H1 (cell line): ENCODE measurements at regions of chr12 and their contacts with region 1.

Region 1: GRCh38 chr12:120469450-120470149 is at the start of gene SRSF9:
- DNase-seq: peak; percentile 89 to 99
- H3K4me3 ChIP-seq: peak within 1 kb of the TSS; percentile 76 to 97 (median 78)
- H3K27ac ChIP-seq: peak within 1 kb of the TSS; percentile 96
- H3K4me1 ChIP-seq: peaks cover 0 to 5% (median 0%) of the 10 kb centered on the region in 4 experiments; a peak in 2 of 7 replicates
- H3K27me3 ChIP-seq: no peaks in the 10 kb centered on the region
- CTCF ChIP-seq: peak; percentile 73 to 86 (median 78)
- EP300 ChIP-seq: no peak
- POLR2A ChIP-seq: peak; percentile 66 to 89
- RAD21 ChIP-seq: peak in 1 of 2 experiments; percentile 37; a peak in 2 of 4 replicates
- total RNA-seq, gene SRSF9: 304 and 307 TPM in 2 replicates

Region 2: GRCh38 chr12:120142231-120142877 is 327.2 kb before region 1 on chr12:
- CTCF ChIA-PET with region 1: no interaction called
- POLR2A ChIA-PET with region 1: no interaction called
- DNase-seq: no peak
- H3K4me3 ChIP-seq: no peak overlapping the region
- H3K27ac ChIP-seq: no peak overlapping the region
- H3K4me1 ChIP-seq: no peaks in the 10 kb centered on the region; a peak in 1 of 7 replicates
- H3K27me3 ChIP-seq: no peaks in the 10 kb centered on the region
- CTCF ChIP-seq: no peak
- EP300 ChIP-seq: no peak
- POLR2A ChIP-seq: no peak
- RAD21 ChIP-seq: no peak

Region 3: DNA sequence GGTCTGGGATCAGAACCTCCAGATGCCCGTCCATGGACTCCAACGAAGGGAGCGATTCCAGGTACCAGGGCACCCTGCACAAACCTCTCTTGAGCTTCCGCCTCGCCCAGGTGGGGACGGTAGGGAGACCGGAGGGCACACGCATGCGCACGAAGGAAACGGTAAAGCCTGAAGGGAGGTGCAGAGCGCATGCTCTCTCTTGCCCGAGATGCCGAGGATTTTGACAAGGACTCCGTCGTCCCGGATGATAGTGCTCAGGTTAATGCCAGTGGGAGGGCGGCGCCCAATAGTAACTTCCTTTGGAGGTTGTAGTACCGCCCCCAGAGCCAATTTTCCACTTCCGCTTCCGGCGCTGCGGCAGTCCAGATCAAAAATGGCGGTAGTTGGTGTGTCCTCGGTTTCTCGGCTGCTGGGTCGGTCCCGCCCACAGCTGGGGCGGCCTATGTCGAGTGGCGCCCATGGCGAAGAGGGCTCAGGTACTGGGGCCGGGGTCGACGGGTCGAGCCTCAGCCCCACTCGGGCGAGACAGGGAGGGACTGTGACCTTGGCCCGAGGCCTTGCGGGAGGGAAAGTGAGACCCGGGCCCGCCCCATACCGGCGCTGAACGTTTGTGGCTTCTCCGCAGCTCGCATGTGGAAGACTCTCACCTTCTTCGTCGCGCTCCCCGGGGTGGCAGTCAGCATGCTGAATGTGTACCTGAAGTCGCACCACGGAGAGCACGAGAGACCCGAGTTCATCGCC is 31.7 kb before region 1 on chr12 and contains the start of gene COX6A1:
- CTCF ChIA-PET with region 1: interaction called, 81 read pairs
- POLR2A ChIA-PET with region 1: interaction called, 365 read pairs
- DNase-seq: peak; percentile 94 to 98
- H3K4me3 ChIP-seq: peak within 1 kb of the TSS; percentile 81 to 92 (median 90)
- H3K27ac ChIP-seq: peak within 1 kb of the TSS; percentile 58; the same call in 1 of the 2 replicates
- H3K4me1 ChIP-seq: peaks cover 0 to 2% (median under 1%) of the 10 kb centered on the region in 4 experiments; a peak in 1 of 7 replicates
- H3K27me3 ChIP-seq: no peaks in the 10 kb centered on the region
- CTCF ChIP-seq: peak; percentile 25 to 31 (median 28); a peak in 3 of 4 replicates
- EP300 ChIP-seq: no peak
- POLR2A ChIP-seq: peak; percentile 35 to 82
- RAD21 ChIP-seq: peak in 1 of 2 experiments; percentile 9; a peak in 2 of 4 replicates
- total RNA-seq, gene COX6A1: 437 and 465 TPM in 2 replicates

Region 4: GRCh38 chr12:120453977-120454376 is 15.6 kb before region 1 on chr12:
- CTCF ChIA-PET with region 1: interaction called, 152 read pairs
- POLR2A ChIA-PET with region 1: interaction called, 365 read pairs
- DNase-seq: no peak
- H3K4me3 ChIP-seq: no peak overlapping the region
- H3K27ac ChIP-seq: no peak overlapping the region
- H3K4me1 ChIP-seq: no peaks in the 10 kb centered on the region; a peak in 1 of 7 replicates
- H3K27me3 ChIP-seq: no peaks in the 10 kb centered on the region
- CTCF ChIP-seq: peak in 2 of 3 experiments; percentile 47 to 71; a peak in 3 of 4 replicates
- EP300 ChIP-seq: no peak
- POLR2A ChIP-seq: no peak
- RAD21 ChIP-seq: peak; percentile 42 to 52

Region 5: GRCh38 chr12:120495723-120496412 is 26.3 kb after region 1 on chr12 and contains the start of gene DYNLL1:
- CTCF ChIA-PET with region 1: interaction called, 47 read pairs
- POLR2A ChIA-PET with region 1: interaction called, 119 read pairs
- DNase-seq: peak; percentile 93 to 100
- H3K4me3 ChIP-seq: peak within 1 kb of the TSS; percentile 95 to 96 (median 95)
- H3K27ac ChIP-seq: peak within 1 kb of the TSS; percentile 43; the same call in 1 of the 2 replicates
- H3K4me1 ChIP-seq: peaks cover 0 to 6% (median 1%) of the 10 kb centered on the region in 4 experiments; a peak in 3 of 7 replicates
- H3K27me3 ChIP-seq: no peaks in the 10 kb centered on the region
- CTCF ChIP-seq: no peak
- EP300 ChIP-seq: 0 out of 3 replicates have a peak, but pooled peaks of 1 of the 2 experiments have one; percentile 39
- POLR2A ChIP-seq: peak; percentile 97 to 98
- RAD21 ChIP-seq: no peak
- total RNA-seq, gene DYNLL1: 419 and 423 TPM in 2 replicates